ENCODE measurements at regions of chr20 and their contacts with region 1.

Region 1: DNA sequence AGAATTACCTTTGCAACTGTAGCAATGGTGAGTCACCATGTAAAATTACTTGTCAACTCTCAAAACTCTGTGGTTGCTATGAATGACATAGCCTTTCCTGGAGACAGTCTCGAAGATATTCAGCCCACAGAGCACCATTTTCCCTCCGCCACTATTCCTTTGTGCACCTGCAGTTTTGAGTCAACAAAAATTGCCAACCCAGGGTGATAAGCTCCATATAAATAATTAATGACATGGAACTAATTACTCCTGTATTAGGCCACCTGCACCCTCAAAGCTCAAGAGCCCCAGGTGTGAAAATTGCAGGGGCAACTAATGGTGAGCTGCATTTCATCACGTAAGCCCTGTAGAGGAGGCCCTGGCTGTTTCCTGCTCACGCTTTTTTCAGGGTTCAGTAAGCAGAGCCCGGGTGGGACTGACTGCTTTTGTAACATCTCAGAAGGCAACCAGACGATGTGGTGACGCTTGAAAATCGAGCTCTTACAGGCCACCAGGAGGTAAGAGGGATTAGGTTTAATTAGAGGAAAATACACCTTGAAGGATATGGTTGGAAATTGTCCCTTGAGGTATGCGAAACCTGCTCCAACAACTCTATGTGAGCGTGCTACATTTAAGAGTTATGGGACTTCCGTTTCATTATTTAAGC is 70.8 kb downstream of the BMP2 start:
- DNase-seq: peak; percentile 25
- ATAC-seq: peak; percentile 84
- H3K4me3 ChIP-seq: no peak overlapping the region
- H3K27ac ChIP-seq: no peak overlapping the region
- H3K4me1 ChIP-seq: no peaks in the 10 kb centered on the region
- H3K27me3 ChIP-seq: no peaks in the 10 kb centered on the region
- CTCF ChIP-seq: no peak
- EP300 ChIP-seq: peak; percentile 18 to 60; a peak in 2 of 4 replicates
- POLR2A ChIP-seq: no peak
- RAD21 ChIP-seq: no peak

Region 2: GRCh38 chr20:6811262-6812035 is 26.9 kb before region 1 on chr20:
- CTCF ChIA-PET with region 1: no interaction called
- POLR2A ChIA-PET with region 1: no interaction called
- RAD21 ChIA-PET with region 1: no interaction called
- SMC1A ChIA-PET with region 1: no interaction called
- in situ Hi-C with region 1: no loop called
- intact Hi-C with region 1: no loop called
- DNase-seq: no peak
- ATAC-seq: no peak
- H3K4me3 ChIP-seq: no peak overlapping the region
- H3K27ac ChIP-seq: no peak overlapping the region
- H3K4me1 ChIP-seq: no peaks in the 10 kb centered on the region
- H3K27me3 ChIP-seq: no peaks in the 10 kb centered on the region; a peak in 1 of 4 replicates
- CTCF ChIP-seq: no peak
- EP300 ChIP-seq: no peak
- POLR2A ChIP-seq: no peak
- RAD21 ChIP-seq: no peak

Region 3: GRCh38 chr20:6863798-6864201 is 25.5 kb after region 1 on chr20:
- CTCF ChIA-PET with region 1: interaction called, 16 read pairs
- POLR2A ChIA-PET with region 1: interaction called, 8 read pairs
- RAD21 ChIA-PET with region 1: interaction called, 52 read pairs
- SMC1A ChIA-PET with region 1: interaction called, 270 read pairs
- in situ Hi-C with region 1: no loop called
- intact Hi-C with region 1: no loop called
- DNase-seq: no peak
- ATAC-seq: peak; percentile 60
- H3K4me3 ChIP-seq: no peak overlapping the region
- H3K27ac ChIP-seq: no peak overlapping the region
- H3K4me1 ChIP-seq: no peaks in the 10 kb centered on the region
- H3K27me3 ChIP-seq: no peaks in the 10 kb centered on the region
- CTCF ChIP-seq: no peak
- EP300 ChIP-seq: no peak
- POLR2A ChIP-seq: no peak
- RAD21 ChIP-seq: no peak

Region 4: GRCh38 chr20:6882561-6883280 is 44.4 kb after region 1 on chr20:
- CTCF ChIA-PET with region 1: interaction called, 3 read pairs
- POLR2A ChIA-PET with region 1: interaction called, 5 read pairs
- RAD21 ChIA-PET with region 1: interaction called, 18 read pairs
- SMC1A ChIA-PET with region 1: interaction called, 47 read pairs
- in situ Hi-C with region 1: no loop called
- intact Hi-C with region 1: no loop called
- DNase-seq: no peak
- ATAC-seq: peak; percentile 25; the same call in 2 of the 3 replicates
- H3K4me3 ChIP-seq: no peak overlapping the region
- H3K27ac ChIP-seq: no peak overlapping the region
- H3K4me1 ChIP-seq: no peaks in the 10 kb centered on the region
- H3K27me3 ChIP-seq: no peaks in the 10 kb centered on the region
- CTCF ChIP-seq: no peak
- EP300 ChIP-seq: no peak
- POLR2A ChIP-seq: no peak
- RAD21 ChIP-seq: no peak

Region 5: GRCh38 chr20:6908673-6909072 is 70.4 kb after region 1 on chr20:
- CTCF ChIA-PET with region 1: interaction called, 3 read pairs
- POLR2A ChIA-PET with region 1: interaction called, 6 read pairs
- RAD21 ChIA-PET with region 1: interaction called, 12 read pairs
- SMC1A ChIA-PET with region 1: interaction called, 19 read pairs
- in situ Hi-C with region 1: no loop called
- intact Hi-C with region 1: no loop called
- DNase-seq: no peak
- ATAC-seq: no peak
- H3K4me3 ChIP-seq: no peak overlapping the region
- H3K27ac ChIP-seq: no peak overlapping the region
- H3K4me1 ChIP-seq: no peaks in the 10 kb centered on the region
- H3K27me3 ChIP-seq: no peaks in the 10 kb centered on the region
- CTCF ChIP-seq: no peak
- EP300 ChIP-seq: no peak
- POLR2A ChIP-seq: no peak
- RAD21 ChIP-seq: no peak

Region 6: GRCh38 chr20:6940046-6940445 is 101.7 kb after region 1 on chr20:
- CTCF ChIA-PET with region 1: interaction called, 118 read pairs
- POLR2A ChIA-PET with region 1: interaction called, 9 read pairs
- RAD21 ChIA-PET with region 1: interaction called, 18 read pairs
- SMC1A ChIA-PET with region 1: interaction called, 73 read pairs
- in situ Hi-C with region 1: no loop called
- intact Hi-C with region 1: no loop called
- DNase-seq: no peak
- ATAC-seq: peak; percentile 80
- H3K4me3 ChIP-seq: no peak overlapping the region
- H3K27ac ChIP-seq: no peak overlapping the region
- H3K4me1 ChIP-seq: no peaks in the 10 kb centered on the region
- H3K27me3 ChIP-seq: no peaks in the 10 kb centered on the region
- CTCF ChIP-seq: peak; percentile 16 to 61 (median 28); a peak in 4 of 6 replicates
- EP300 ChIP-seq: no peak
- POLR2A ChIP-seq: no peak
- RAD21 ChIP-seq: peak; percentile 16; the same call in 1 of the 2 replicates

Region 7: GRCh38 chr20:7302250-7302649 is 463.9 kb after region 1 on chr20:
- CTCF ChIA-PET with region 1: no interaction called
- POLR2A ChIA-PET with region 1: no interaction called
- RAD21 ChIA-PET with region 1: no interaction called
- SMC1A ChIA-PET with region 1: no interaction called
- in situ Hi-C with region 1: no loop called
- intact Hi-C with region 1: no loop called
- DNase-seq: no peak
- ATAC-seq: no peak
- H3K4me3 ChIP-seq: no peak overlapping the region
- H3K27ac ChIP-seq: no peak overlapping the region
- H3K4me1 ChIP-seq: no peaks in the 10 kb centered on the region
- H3K27me3 ChIP-seq: no peaks in the 10 kb centered on the region
- CTCF ChIP-seq: no peak
- EP300 ChIP-seq: no peak
- POLR2A ChIP-seq: no peak
- RAD21 ChIP-seq: no peak

Measured in GM12878 (cell line).